ENCODE measurements at regions of chr7 and their contacts with region 1.

Region 1: GRCh38 chr7:83936056-83936708 is 258.4 kb downstream of the SEMA3A start:
- DNase-seq: peak; percentile 78
- H3K4me3 Mint-ChIP-seq: no peak overlapping the region
- H3K27ac Mint-ChIP-seq: no peak overlapping the region
- H3K4me1 Mint-ChIP-seq: peaks cover 5% of the 10 kb centered on the region
- H3K27me3 Mint-ChIP-seq: no peaks in the 10 kb centered on the region
- CTCF ChIP-seq: peak; percentile 75

Region 2: DNA sequence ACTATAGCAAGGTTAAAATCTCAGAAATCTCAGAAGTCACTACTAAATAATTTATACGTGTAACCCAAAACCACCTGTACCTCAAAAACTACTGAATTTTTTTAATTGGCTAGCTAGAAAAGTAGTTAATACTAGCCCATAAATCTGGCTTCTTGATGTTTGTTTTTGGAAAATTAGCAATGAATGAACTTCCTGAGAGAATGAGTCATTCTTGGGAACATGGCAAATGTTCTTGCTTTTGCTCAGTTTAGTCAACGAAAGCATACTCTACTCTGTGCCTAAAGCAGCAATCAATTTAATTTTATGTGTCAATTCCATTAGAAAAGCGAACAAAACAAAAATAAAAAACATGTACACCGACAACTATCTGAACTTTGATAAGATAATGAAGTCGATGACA is 356.4 kb before region 1 on chr7:
- CTCF ChIA-PET with region 1: no interaction called
- POLR2A ChIA-PET with region 1: no interaction called
- intact Hi-C with region 1: no loop called
- DNase-seq: no peak
- H3K4me3 Mint-ChIP-seq: no peak overlapping the region
- H3K27ac Mint-ChIP-seq: no peak overlapping the region
- H3K4me1 Mint-ChIP-seq: peaks cover 11% of the 10 kb centered on the region
- H3K27me3 Mint-ChIP-seq: no peaks in the 10 kb centered on the region
- CTCF ChIP-seq: no peak

Region 3: DNA sequence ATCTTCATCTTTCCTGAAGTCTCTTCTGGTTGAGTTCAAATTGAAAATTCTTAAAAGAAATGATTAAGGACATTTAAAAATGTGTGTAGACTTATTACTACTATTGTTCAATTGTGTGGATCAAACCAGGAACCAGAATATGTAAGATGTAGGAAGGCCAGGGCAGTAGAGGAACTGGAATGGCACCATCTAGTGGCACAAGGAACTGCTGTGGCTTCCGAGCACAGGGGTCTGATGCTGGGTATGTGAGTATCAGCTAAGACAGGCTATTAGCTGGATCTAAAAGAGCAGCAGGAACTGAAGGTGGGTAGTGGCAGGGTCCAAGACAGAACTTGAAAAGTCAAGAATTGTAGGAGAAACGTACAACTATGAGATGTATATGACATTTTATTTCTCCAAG is 11.1 kb after region 1 on chr7:
- CTCF ChIA-PET with region 1: interaction called, 92 read pairs
- POLR2A ChIA-PET with region 1: no interaction called
- intact Hi-C with region 1: no loop called
- DNase-seq: peak; percentile 33
- H3K4me3 Mint-ChIP-seq: no peak overlapping the region
- H3K27ac Mint-ChIP-seq: no peak overlapping the region
- H3K4me1 Mint-ChIP-seq: no peaks in the 10 kb centered on the region
- H3K27me3 Mint-ChIP-seq: no peaks in the 10 kb centered on the region
- CTCF ChIP-seq: peak; percentile 27

Region 4: DNA sequence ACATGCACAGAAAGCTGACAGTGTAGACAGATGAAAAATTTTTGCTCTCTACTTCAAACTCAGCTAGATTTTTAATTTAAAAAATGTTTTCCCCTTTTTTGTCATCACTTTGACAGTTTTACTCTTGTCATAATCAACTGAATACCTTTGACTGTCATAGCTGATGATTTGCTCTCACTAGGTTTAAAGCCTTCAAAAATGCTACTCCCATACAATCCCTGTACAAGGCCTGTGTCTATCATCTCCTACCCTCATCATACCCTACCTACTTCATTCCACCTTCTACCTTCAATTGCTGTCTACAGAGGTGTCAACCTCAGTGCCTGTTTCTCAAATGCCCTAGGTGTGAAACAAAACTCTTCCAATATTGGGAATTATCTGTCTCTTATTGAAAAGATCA is 28.1 kb after region 1 on chr7:
- CTCF ChIA-PET with region 1: interaction called, 26 read pairs
- POLR2A ChIA-PET with region 1: no interaction called
- intact Hi-C with region 1: loop called (anchors 2 kb)
- DNase-seq: no peak
- H3K4me3 Mint-ChIP-seq: no peak overlapping the region
- H3K27ac Mint-ChIP-seq: no peak overlapping the region
- H3K4me1 Mint-ChIP-seq: no peaks in the 10 kb centered on the region
- H3K27me3 Mint-ChIP-seq: no peaks in the 10 kb centered on the region
- CTCF ChIP-seq: no peak

Region 5: GRCh38 chr7:83976295-83976694 is 40.1 kb after region 1 on chr7:
- CTCF ChIA-PET with region 1: interaction called, 11 read pairs
- POLR2A ChIA-PET with region 1: no interaction called
- intact Hi-C with region 1: loop called (anchors 2 kb)
- DNase-seq: peak; percentile 54
- H3K4me3 Mint-ChIP-seq: no peak overlapping the region
- H3K27ac Mint-ChIP-seq: no peak overlapping the region
- H3K4me1 Mint-ChIP-seq: no peaks in the 10 kb centered on the region
- H3K27me3 Mint-ChIP-seq: no peaks in the 10 kb centered on the region
- CTCF ChIP-seq: peak; percentile 55

Region 6: DNA sequence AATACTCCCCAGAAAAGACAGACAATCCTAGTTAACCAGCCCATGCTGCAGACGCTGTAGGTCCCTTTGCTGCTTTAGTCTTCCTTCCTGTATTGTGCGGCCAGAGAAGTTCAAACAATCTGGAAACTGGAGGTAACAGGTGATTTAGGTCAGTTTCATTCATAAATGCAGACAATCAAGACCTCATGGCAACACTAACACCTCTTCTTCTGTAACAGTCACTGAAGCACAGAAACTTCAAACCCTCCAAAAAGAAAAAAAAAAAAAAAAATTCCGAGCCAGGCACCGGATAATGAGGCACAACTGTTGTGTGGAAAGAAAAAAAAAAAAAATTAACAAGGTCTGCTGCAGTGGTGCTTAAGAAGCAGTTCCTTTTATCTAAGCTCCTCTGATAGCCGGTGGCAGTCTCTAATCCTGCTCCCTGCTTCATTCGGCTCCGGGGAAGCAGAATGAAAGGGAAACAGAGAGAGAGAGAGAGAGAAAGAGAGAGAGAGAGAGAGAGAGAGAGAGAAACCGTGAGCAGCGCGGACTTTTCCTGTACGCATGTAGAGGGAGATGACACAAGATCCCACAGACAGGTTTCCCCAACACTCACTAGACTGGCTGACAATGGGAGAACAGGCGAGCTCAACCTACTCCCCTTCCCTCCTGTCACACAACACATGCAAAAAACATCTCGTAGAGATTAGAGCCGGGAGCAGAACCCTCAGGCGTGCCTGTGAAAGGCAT is 258.5 kb after region 1 on chr7 and contains the start of gene SEMA3A:
- CTCF ChIA-PET with region 1: interaction called, 13 read pairs
- POLR2A ChIA-PET with region 1: no interaction called
- intact Hi-C with region 1: loop called (anchors 2 kb)
- DNase-seq: peak; percentile 70
- H3K4me3 Mint-ChIP-seq: peak within 1 kb of the TSS; percentile 81
- H3K27ac Mint-ChIP-seq: peak within 1 kb of the TSS; percentile 33
- H3K4me1 Mint-ChIP-seq: peaks cover 6% of the 10 kb centered on the region
- H3K27me3 Mint-ChIP-seq: no peaks in the 10 kb centered on the region
- CTCF ChIP-seq: no peak
- total RNA-seq, gene SEMA3A: 1.5 and 3.2 TPM in 2 replicates

Region 7: DNA sequence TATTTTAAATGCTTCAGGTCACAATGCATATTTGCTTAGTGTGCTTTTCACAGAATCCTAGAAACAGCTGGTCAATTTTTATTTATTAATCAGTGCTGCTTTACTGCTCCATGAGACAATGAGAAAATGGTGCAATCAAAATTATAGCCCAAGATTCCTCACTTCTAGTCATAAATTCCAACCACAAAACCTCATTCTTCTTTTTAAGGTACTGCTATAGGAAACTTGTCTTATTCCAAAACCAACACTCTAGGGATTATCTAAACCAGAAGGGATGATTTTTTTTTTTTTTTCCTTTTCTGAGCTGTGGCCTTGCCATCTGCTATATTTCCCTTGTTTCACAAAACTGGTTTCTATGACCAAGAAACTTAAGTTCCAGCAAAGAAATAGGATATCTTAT is 322.4 kb after region 1 on chr7:
- CTCF ChIA-PET with region 1: no interaction called
- POLR2A ChIA-PET with region 1: no interaction called
- intact Hi-C with region 1: no loop called
- DNase-seq: no peak
- H3K4me3 Mint-ChIP-seq: no peak overlapping the region
- H3K27ac Mint-ChIP-seq: no peak overlapping the region
- H3K4me1 Mint-ChIP-seq: no peaks in the 10 kb centered on the region
- H3K27me3 Mint-ChIP-seq: no peaks in the 10 kb centered on the region
- CTCF ChIP-seq: no peak

Region 8: GRCh38 chr7:85014936-85015660 is 1078.9 kb after region 1 on chr7:
- CTCF ChIA-PET with region 1: interaction called, 324 read pairs
- POLR2A ChIA-PET with region 1: no interaction called
- intact Hi-C with region 1: no loop called
- DNase-seq: no peak
- H3K4me3 Mint-ChIP-seq: no peak overlapping the region
- H3K27ac Mint-ChIP-seq: no peak overlapping the region
- H3K4me1 Mint-ChIP-seq: no peaks in the 10 kb centered on the region
- H3K27me3 Mint-ChIP-seq: no peaks in the 10 kb centered on the region
- CTCF ChIP-seq: no peak

Region 9: GRCh38 chr7:85030893-85031292 is 1094.7 kb after region 1 on chr7:
- CTCF ChIA-PET with region 1: interaction called, 324 read pairs
- POLR2A ChIA-PET with region 1: no interaction called
- intact Hi-C with region 1: no loop called
- DNase-seq: peak; percentile 35
- H3K4me3 Mint-ChIP-seq: no peak overlapping the region
- H3K27ac Mint-ChIP-seq: no peak overlapping the region
- H3K4me1 Mint-ChIP-seq: peaks cover 6% of the 10 kb centered on the region
- H3K27me3 Mint-ChIP-seq: peaks cover 50% of the 10 kb centered on the region
- CTCF ChIP-seq: peak; percentile 39